ENCODE measurements at regions of chr1 and their contacts with region 1.

Region 1: DNA sequence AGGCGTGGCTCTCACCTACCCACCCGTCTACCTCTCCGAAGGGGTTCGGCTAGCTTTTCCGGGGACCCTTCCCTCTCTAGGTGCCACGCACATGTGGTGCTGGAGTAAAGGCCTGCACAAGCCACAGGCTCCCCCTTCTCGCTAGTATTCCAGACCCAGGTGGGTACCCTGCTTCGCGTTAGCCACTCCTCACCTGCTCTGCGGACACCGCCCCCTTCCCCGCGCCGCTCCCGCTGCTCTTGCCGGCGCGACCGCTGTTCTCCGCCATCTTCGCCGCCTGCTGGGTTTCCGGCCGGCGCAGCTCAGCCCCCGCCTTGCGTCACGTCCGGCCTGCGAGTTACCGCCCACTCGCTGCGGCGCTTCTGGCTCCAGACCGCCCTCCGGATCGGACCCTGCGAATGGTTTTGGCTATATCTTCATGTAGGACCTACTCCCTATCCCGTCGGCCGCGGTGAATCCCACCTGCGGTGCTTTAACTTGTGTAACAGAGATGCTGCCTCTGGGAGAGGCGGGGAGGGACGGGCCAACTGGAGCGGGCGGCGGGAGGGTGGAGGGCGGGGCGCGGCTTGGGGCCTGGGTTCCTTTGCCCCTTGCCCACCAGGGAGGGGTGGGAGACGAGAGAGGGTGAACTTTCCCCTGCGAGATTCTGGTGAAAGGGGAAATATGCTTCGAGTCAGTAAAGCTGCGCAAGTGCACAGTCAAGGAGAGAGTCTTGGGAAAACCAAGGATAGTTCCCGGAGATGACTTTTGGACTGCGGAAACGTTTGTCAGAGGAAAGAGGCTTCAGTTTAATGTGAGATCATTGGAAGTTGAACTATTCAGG is at the starts of genes NIT1 and PFDN2:
- DNase-seq: peak; percentile 85
- H3K4me3 Mint-ChIP-seq: peak within 1 kb of the TSS; percentile 97
- H3K27ac Mint-ChIP-seq: peak within 1 kb of the TSS; percentile 95
- H3K4me1 Mint-ChIP-seq: peaks cover 50% of the 10 kb centered on the region
- H3K27me3 Mint-ChIP-seq: no peaks in the 10 kb centered on the region
- CTCF ChIP-seq: no peak
- total RNA-seq, gene NIT1: 73.4 and 75.4 TPM in 2 replicates
- total RNA-seq, gene PFDN2: 514 and 683 TPM in 2 replicates

Region 2: GRCh38 chr1:161071886-161072371 is 46.0 kb before region 1 on chr1:
- CTCF ChIA-PET with region 1: interaction called, 10 read pairs
- POLR2A ChIA-PET with region 1: interaction called, 32 read pairs
- intact Hi-C with region 1: loop called (anchors 1 kb)
- DNase-seq: peak; percentile 73
- H3K4me3 Mint-ChIP-seq: peak overlapping the region; percentile 90
- H3K27ac Mint-ChIP-seq: peak overlapping the region; percentile 46
- H3K4me1 Mint-ChIP-seq: peaks cover 51% of the 10 kb centered on the region
- H3K27me3 Mint-ChIP-seq: no peaks in the 10 kb centered on the region
- CTCF ChIP-seq: peak; percentile 87

Region 3: GRCh38 chr1:161132410-161133219 is 14.6 kb after region 1 on chr1 and contains the start of gene DEDD:
- CTCF ChIA-PET with region 1: interaction called, 7 read pairs
- POLR2A ChIA-PET with region 1: interaction called, 3 read pairs
- intact Hi-C with region 1: loop called (anchors 1 kb)
- DNase-seq: peak; percentile 99
- H3K4me3 Mint-ChIP-seq: no peak within 1 kb of the TSS
- H3K27ac Mint-ChIP-seq: no peak within 1 kb of the TSS
- H3K4me1 Mint-ChIP-seq: peaks cover 23% of the 10 kb centered on the region
- H3K27me3 Mint-ChIP-seq: no peaks in the 10 kb centered on the region
- CTCF ChIP-seq: no peak
- total RNA-seq, gene DEDD: 63.1 and 73.6 TPM in 2 replicates

Region 4: GRCh38 chr1:161153679-161154426 is 35.9 kb after region 1 on chr1 and contains the start of gene UFC1:
- CTCF ChIA-PET with region 1: interaction called, 3 read pairs
- POLR2A ChIA-PET with region 1: interaction called, 33 read pairs
- intact Hi-C with region 1: no loop called
- DNase-seq: peak; percentile 94
- H3K4me3 Mint-ChIP-seq: peak within 1 kb of the TSS; percentile 92
- H3K27ac Mint-ChIP-seq: peak within 1 kb of the TSS; percentile 100
- H3K4me1 Mint-ChIP-seq: peaks cover 18% of the 10 kb centered on the region
- H3K27me3 Mint-ChIP-seq: no peaks in the 10 kb centered on the region
- CTCF ChIP-seq: no peak
- total RNA-seq, gene UFC1: 123 and 125 TPM in 2 replicates

Region 5: DNA sequence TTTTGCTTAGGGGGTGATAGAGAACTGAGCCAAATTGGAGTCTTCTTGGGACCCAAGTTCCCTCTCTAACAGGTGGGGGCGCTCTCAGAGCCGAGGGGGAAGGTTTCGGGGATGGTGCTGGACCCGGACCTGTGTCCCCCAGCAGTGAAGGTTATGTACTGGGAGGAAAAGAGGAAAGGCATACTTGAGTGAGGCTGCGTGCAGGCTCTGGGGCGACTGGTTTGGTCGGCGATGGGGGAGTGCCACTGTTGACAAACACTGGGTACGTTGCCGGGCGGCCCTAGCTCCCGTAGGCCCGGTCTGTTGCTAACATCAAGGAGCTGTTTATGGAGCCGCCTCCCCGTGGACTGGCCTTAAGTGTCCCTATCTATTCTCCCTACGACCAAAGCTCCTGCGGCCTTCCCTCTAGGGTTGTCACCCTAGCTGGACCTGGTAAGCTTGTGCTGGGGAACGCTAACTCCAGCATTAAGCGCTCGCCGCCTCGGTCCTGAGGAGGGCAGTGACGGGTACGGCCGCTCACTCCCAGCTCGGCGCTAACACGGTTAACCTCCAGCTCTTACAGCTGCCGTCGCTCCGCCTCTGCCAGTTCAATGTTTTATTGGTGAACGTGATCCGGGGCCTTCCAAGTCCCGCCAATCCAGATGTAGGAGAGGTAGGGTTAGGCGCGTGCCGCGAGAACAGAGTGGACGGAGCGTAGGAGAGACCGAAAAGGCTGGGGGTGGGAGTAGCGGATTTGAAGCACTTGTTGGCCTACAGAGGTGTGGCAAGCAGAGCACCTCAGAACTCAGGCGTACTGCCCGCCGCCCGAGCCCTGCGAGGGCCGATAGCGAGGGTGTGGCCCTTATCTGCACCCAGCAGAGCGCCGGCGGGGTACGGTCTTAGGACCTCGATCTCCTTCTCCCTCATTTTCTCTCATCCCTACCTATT is 48.0 kb after region 1 on chr1 and contains the start of gene PPOX:
- CTCF ChIA-PET with region 1: interaction called, 5 read pairs
- POLR2A ChIA-PET with region 1: interaction called, 77 read pairs
- intact Hi-C with region 1: loop called (anchors 2 kb)
- DNase-seq: peak; percentile 100
- H3K4me3 Mint-ChIP-seq: peak within 1 kb of the TSS; percentile 98
- H3K27ac Mint-ChIP-seq: peak within 1 kb of the TSS; percentile 100
- H3K4me1 Mint-ChIP-seq: peaks cover 47% of the 10 kb centered on the region
- H3K27me3 Mint-ChIP-seq: no peaks in the 10 kb centered on the region
- CTCF ChIP-seq: peak; percentile 36
- total RNA-seq, gene PPOX: 30.3 and 32.4 TPM in 2 replicates

Region 6: GRCh38 chr1:161330346-161330745 is 212.4 kb after region 1 on chr1:
- CTCF ChIA-PET with region 1: no interaction called
- POLR2A ChIA-PET with region 1: no interaction called
- intact Hi-C with region 1: no loop called
- DNase-seq: peak; percentile 75
- H3K4me3 Mint-ChIP-seq: no peak overlapping the region
- H3K27ac Mint-ChIP-seq: peak overlapping the region; percentile 41
- H3K4me1 Mint-ChIP-seq: peaks cover 10% of the 10 kb centered on the region
- H3K27me3 Mint-ChIP-seq: no peaks in the 10 kb centered on the region
- CTCF ChIP-seq: no peak